SK-N-SH (cell line): ENCODE measurements at regions of chr13 and their contacts with region 1.

Region 1: GRCh38 chr13:99656092-99656745 is 154.9 kb downstream of the TM9SF2 start:
- DNase-seq: peak; percentile 79
- H3K4me3 ChIP-seq: peak overlapping the region in 1 of 2 experiments; percentile 22; a peak in 1 of 4 replicates
- H3K27ac ChIP-seq: no peak overlapping the region
- H3K4me1 ChIP-seq: peaks cover 0 to 5% of the 10 kb centered on the region in 2 experiments; a peak in 3 of 4 replicates
- H3K27me3 ChIP-seq: no peaks in the 10 kb centered on the region
- CTCF ChIP-seq: peak; percentile 91
- EP300 ChIP-seq: no peak
- RAD21 ChIP-seq: peak; percentile 94

Region 2: GRCh38 chr13:99666146-99666805 is 10.1 kb after region 1 on chr13:
- CTCF ChIA-PET with region 1: interaction called, 26 read pairs
- POLR2A ChIA-PET with region 1: no interaction called
- DNase-seq: no peak
- H3K4me3 ChIP-seq: no peak overlapping the region
- H3K27ac ChIP-seq: no peak overlapping the region
- H3K4me1 ChIP-seq: peaks cover 0 to 6% of the 10 kb centered on the region in 2 experiments; a peak in 1 of 4 replicates
- H3K27me3 ChIP-seq: peaks cover 13% of the 10 kb centered on the region; the same call in 1 of the 2 replicates
- CTCF ChIP-seq: no peak
- EP300 ChIP-seq: no peak
- RAD21 ChIP-seq: no peak

Region 3: DNA sequence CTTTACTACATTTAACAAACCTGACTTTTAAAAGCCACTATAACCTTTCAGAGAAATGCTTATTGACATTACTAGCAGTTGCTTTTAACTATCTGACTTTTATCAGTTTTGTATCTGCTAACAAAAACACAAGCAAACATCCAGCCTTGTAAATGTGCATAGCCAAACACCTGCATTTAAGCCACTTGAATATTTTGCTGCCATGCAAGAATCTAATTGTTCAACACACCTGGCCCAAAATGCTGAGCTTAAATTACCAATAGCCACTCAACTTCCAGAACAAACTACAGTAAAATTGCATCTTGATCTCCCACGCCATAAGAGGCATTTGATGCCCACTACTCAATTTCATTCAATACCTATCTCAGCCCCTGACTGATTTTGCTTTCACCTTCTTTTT is 306.0 kb after region 1 on chr13:
- CTCF ChIA-PET with region 1: interaction called, 14 read pairs
- POLR2A ChIA-PET with region 1: no interaction called
- DNase-seq: no peak
- H3K4me3 ChIP-seq: no peak overlapping the region
- H3K27ac ChIP-seq: no peak overlapping the region
- H3K4me1 ChIP-seq: no peaks in the 10 kb centered on the region; a peak in 1 of 4 replicates
- H3K27me3 ChIP-seq: peaks cover 78% of the 10 kb centered on the region
- CTCF ChIP-seq: no peak
- EP300 ChIP-seq: no peak
- RAD21 ChIP-seq: no peak

Region 4: GRCh38 chr13:100235311-100235901 is 579.2 kb after region 1 on chr13:
- CTCF ChIA-PET with region 1: interaction called, 63 read pairs
- POLR2A ChIA-PET with region 1: no interaction called
- DNase-seq: peak; percentile 51
- H3K4me3 ChIP-seq: 0 out of 4 replicates have a peak overlapping the region, but pooled peaks of 1 of the 2 experiments have one; percentile 7
- H3K27ac ChIP-seq: peak overlapping the region in 1 of 2 experiments; percentile 21; a peak in 2 of 4 replicates
- H3K4me1 ChIP-seq: peaks cover 0 to 8% of the 10 kb centered on the region in 2 experiments; a peak in 2 of 4 replicates
- H3K27me3 ChIP-seq: no peaks in the 10 kb centered on the region
- CTCF ChIP-seq: peak; percentile 78
- EP300 ChIP-seq: peak in 1 of 2 experiments; percentile 72; a peak in 2 of 4 replicates
- RAD21 ChIP-seq: peak; percentile 82

Region 5: DNA sequence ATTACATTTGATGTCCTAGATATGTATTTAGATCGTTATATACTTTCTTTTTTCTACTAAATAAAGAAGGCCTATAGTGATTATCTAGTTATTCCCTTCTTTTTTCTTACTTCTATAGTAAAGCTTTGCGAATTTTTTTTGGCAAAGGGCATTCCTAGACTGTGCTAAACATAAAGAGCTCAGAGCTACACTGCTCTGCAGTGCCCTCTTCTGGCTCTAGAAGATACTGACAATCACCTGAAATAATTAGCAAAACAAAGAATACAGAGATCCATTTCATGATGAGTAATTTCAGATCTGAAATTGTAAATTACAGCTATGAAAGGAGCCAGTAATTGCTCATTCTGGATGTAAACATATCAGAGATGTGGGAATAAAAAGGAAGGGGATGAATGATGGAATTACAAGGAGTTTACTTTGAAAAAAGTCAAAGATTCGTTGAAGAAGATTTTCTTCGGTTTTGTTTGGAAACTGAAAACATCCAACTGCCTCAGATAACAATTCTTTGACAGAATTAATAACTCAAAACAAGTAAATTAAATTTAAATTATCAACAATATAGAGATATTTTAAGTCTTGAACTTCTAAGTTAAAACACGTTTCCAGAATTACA is 1471.6 kb after region 1 on chr13:
- CTCF ChIA-PET with region 1: interaction called, 13 read pairs
- POLR2A ChIA-PET with region 1: no interaction called
- DNase-seq: peak; percentile 53
- H3K4me3 ChIP-seq: no peak overlapping the region; a peak in 1 of 4 replicates
- H3K27ac ChIP-seq: no peak overlapping the region
- H3K4me1 ChIP-seq: no peaks in the 10 kb centered on the region
- H3K27me3 ChIP-seq: no peaks in the 10 kb centered on the region
- CTCF ChIP-seq: peak; percentile 92
- EP300 ChIP-seq: no peak
- RAD21 ChIP-seq: peak; percentile 84